Activated CD4-positive, alpha-beta T cell treated with anti-CD3 and anti-CD28 coated beads for 36 hours (primary cell): ENCODE measurements at regions of chr11 and their contacts with region 1.

Region 1: DNA sequence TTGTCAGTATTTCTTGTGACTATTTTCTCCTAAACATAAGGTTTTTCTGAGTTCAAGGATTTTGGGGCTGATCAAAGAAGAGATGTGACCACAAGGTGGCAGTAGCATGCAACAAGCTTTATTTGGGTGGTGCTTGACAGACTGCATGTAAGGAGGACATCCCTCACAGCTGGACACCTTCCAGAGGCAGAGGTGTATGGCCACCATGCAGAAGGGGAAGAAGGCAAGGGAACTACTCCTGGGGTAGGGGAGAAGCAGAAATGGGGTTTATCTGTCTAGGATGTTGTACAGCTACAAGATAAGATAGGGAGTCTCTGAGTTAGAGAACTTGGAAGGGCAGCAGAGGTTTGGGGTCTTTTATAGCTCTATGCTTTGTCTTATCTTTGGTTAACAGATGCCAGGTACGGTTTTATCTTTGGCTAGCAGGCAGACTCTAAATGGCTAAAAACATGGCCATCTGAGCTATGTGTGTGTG is 5.1 kb upstream of the BIRC2 start:
- DNase-seq: peak; percentile 84
- ATAC-seq: peak; percentile 43
- H3K4me3 Mint-ChIP-seq: no peak overlapping the region
- H3K27ac Mint-ChIP-seq: no peak overlapping the region
- H3K4me1 Mint-ChIP-seq: peaks cover 45% of the 10 kb centered on the region
- H3K27me3 Mint-ChIP-seq: no peaks in the 10 kb centered on the region

Region 2: DNA sequence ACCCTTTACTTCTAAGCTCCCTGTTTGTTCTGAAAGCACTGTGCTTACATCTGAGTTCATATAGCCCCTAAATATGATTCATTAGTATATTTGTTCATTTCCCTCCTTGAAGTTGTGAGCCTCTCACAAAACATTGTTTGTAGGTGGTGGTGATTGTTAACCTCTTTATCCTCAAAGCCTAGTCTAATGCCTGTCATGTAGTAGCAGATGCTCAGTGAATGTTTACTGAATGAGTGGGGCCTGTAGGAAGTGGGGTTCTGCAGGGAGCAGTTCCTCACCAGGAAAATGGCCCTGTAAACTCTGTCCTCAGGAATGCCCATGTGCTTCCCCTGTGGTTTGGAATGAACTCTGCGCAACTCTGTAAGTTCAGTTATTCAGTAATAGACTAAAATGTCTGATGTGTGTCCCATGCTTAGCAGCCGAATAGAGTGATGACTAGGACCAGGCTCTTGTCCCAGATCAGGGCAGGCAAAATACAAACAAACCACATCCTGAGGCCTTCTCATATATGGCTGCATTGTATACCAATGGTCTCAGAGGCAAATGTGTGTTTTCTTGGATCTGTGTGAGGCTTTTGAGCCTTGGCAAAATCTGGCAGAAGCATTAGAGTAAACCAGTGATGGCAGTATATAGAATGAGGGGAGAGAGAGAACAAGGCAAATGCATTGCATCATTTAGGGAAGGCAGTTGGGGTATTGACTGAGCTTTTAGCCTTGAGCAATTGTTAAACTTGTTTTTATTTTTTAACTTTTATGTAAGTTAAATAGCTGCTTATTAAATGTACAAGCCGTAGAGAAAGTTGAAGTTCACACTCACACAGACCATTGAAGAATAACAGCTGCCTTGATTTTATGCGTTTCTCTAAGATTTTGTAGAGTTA is 116.0 kb before region 1 on chr11:
- CTCF ChIA-PET with region 1: no interaction called
- POLR2A ChIA-PET with region 1: no interaction called
- intact Hi-C with region 1: no loop called
- DNase-seq: no peak
- ATAC-seq: no peak
- H3K4me3 Mint-ChIP-seq: no peak overlapping the region
- H3K27ac Mint-ChIP-seq: no peak overlapping the region
- H3K4me1 Mint-ChIP-seq: no peaks in the 10 kb centered on the region
- H3K27me3 Mint-ChIP-seq: peaks cover 2% of the 10 kb centered on the region

Region 3: GRCh38 chr11:102287964-102288724 is 53.7 kb before region 1 on chr11:
- CTCF ChIA-PET with region 1: interaction called, 67 read pairs
- POLR2A ChIA-PET with region 1: no interaction called
- intact Hi-C with region 1: loop called (anchors 1 kb)
- DNase-seq: peak; percentile 50
- ATAC-seq: peak; percentile 92
- H3K4me3 Mint-ChIP-seq: peak overlapping the region; percentile 34
- H3K27ac Mint-ChIP-seq: peak overlapping the region; percentile 59
- H3K4me1 Mint-ChIP-seq: peaks cover 24% of the 10 kb centered on the region
- H3K27me3 Mint-ChIP-seq: no peaks in the 10 kb centered on the region

Region 4: DNA sequence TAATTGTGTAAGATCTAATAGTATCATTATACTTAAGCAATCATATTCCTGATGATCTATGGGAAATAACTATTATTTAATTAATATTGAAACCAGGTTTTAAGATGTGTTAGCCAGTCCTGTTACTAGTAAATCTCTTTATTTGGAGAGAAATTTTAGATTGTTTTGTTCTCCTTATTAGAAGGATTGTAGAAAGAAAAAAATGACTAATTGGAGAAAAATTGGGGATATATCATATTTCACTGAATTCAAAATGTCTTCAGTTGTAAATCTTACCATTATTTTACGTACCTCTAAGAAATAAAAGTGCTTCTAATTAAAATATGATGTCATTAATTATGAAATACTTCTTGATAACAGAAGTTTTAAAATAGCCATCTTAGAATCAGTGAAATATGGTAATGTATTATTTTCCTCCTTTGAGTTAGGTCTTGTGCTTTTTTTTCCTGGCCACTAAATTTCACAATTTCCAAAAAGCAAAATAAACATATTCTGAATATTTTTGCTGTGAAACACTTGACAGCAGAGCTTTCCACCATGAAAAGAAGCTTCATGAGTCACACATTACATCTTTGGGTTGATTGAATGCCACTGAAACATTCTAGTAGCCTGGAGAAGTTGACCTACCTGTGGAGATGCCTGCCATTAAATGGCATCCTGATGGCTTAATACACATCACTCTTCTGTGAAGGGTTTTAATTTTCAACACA is 18.2 kb before region 1 on chr11:
- CTCF ChIA-PET with region 1: interaction called, 27 read pairs
- POLR2A ChIA-PET with region 1: no interaction called
- intact Hi-C with region 1: loop called in 1 of 2 experiments (anchors 2 kb)
- DNase-seq: no peak
- ATAC-seq: no peak
- H3K4me3 Mint-ChIP-seq: no peak overlapping the region
- H3K27ac Mint-ChIP-seq: peak overlapping the region; percentile 47
- H3K4me1 Mint-ChIP-seq: peaks cover 48% of the 10 kb centered on the region
- H3K27me3 Mint-ChIP-seq: no peaks in the 10 kb centered on the region

Region 5: DNA sequence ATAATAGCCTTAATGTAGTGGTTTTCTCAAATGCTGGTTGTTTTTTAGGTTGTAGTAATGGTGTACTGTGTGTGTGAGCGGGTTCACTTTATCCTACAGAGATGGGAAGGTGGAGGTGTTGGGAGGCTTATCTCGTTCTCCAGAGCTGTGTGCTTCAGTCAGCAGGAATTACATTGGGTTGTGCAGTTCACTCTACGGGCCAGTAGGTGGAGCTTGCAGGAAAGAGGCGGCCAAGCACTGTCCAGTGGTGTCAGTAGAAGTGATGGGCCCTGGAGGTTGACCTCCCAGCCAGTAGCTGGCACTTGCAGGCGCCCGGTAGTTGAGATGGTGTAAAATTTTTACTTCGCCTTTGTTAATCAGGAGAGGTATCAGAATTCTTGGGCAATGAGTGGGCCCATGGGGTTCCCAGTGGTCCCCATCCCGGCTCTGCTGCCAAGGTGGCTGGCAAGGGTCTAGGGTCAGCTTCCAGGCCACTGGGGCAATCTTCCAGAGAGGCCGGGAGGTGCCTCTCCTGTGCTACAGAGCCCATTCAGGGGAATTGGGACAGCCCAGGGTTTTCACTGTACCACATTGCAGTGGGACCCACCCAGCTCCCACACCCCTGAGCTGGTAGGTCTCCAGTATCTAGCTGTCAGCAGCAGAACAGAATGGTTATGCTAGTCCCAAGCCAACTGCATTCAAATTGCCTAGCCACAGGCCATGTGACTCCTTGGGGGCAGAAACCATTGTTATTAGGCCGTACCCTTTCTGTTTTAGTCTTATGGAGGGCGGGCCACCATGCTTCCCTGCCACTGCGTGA is 49.0 kb after region 1 on chr11:
- CTCF ChIA-PET with region 1: interaction called, 20 read pairs
- POLR2A ChIA-PET with region 1: no interaction called
- intact Hi-C with region 1: no loop called
- DNase-seq: peak; percentile 68
- ATAC-seq: peak; percentile 78
- H3K4me3 Mint-ChIP-seq: no peak overlapping the region
- H3K27ac Mint-ChIP-seq: peak overlapping the region; percentile 44
- H3K4me1 Mint-ChIP-seq: peaks cover 41% of the 10 kb centered on the region
- H3K27me3 Mint-ChIP-seq: no peaks in the 10 kb centered on the region

Region 6: DNA sequence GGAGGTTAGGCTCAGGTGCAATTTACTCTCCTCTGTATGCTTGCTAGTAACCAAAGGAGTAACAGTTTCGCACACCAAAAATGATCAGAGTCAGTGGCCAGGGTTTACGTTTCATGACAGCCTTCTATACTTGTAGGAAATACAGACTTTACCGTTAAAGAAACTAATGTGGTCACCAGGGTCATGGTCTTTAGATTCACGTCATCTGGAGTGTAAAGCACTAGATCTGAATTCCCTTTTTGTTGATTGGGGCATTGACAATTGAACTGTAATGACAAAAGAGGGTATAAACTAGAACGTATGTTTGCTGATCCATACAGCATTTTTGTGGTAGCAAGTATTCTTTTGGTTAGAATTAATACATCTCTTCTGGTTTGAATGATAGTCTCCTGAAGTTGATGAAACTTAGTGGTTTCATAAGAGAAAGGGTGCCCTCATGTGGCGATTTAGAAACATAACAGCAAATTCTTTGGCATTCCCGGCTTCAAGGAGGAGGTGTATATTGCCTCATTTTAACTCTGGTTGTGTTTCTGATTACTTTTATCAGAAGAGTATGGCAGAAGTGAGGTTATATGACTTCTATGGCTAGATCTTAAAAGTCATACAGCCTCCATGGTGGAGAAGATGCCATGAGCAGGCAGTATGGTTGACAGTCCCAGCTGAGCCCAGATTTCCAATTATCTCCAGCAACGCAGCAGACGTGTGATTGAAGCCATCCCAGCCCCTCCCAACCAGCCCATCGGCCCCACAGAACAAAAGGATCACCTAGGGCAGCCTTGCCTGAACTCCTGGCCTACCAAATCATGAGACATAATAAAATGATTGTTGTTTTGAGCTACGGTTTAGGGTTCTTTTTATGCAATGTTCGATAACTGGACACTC is 153.5 kb after region 1 on chr11:
- CTCF ChIA-PET with region 1: interaction called, 44 read pairs
- POLR2A ChIA-PET with region 1: no interaction called
- intact Hi-C with region 1: loop called (anchors 1 kb)
- DNase-seq: peak; percentile 40
- ATAC-seq: peak; percentile 68
- H3K4me3 Mint-ChIP-seq: no peak overlapping the region
- H3K27ac Mint-ChIP-seq: no peak overlapping the region
- H3K4me1 Mint-ChIP-seq: peaks cover 28% of the 10 kb centered on the region
- H3K27me3 Mint-ChIP-seq: peaks cover 4% of the 10 kb centered on the region

Region 7: GRCh38 chr11:102666331-102666957 is 324.6 kb after region 1 on chr11:
- CTCF ChIA-PET with region 1: interaction called, 48 read pairs
- POLR2A ChIA-PET with region 1: no interaction called
- intact Hi-C with region 1: loop called (anchors 1 kb)
- DNase-seq: peak; percentile 37
- ATAC-seq: peak; percentile 64
- H3K4me3 Mint-ChIP-seq: no peak overlapping the region
- H3K27ac Mint-ChIP-seq: no peak overlapping the region
- H3K4me1 Mint-ChIP-seq: no peaks in the 10 kb centered on the region
- H3K27me3 Mint-ChIP-seq: peaks cover 2% of the 10 kb centered on the region